Endothelial cell of umbilical vein (primary cell): ENCODE measurements at regions of chr13 and their contacts with region 1.

Region 1: GRCh38 chr13:59318320-59318930 is 845.3 kb downstream of the DIAPH3 start:
- DNase-seq: peak; percentile 86
- H3K4me3 ChIP-seq: no peak overlapping the region
- H3K27ac ChIP-seq: no peak overlapping the region
- H3K4me1 ChIP-seq: peaks cover 23% of the 10 kb centered on the region
- H3K27me3 ChIP-seq: no peaks in the 10 kb centered on the region
- CTCF ChIP-seq: peak; percentile 68 to 71
- POLR2A ChIP-seq: no peak

Region 2: DNA sequence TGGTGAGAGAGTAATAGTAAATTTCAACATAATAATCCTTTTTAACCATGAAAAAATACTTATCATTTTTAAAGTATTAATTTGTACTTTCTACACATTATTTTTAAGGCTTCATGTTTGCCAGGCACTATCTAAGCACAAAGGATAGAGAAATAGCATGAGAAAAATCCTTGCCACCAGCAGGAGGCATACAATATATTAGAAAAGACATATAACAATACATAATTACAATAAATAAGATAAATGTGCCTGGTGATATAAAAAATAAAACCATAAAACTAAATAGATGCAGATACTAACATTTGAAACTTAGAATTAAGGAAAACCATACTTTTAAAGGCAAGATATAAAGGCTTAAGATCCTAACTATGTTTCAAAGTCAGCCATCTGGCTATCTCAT is 411.1 kb before region 1 on chr13:
- CTCF ChIA-PET with region 1: interaction called, 6 read pairs
- POLR2A ChIA-PET with region 1: no interaction called
- dilution Hi-C with region 1: no loop called
- intact Hi-C with region 1: loop called (anchors 5 kb)
- DNase-seq: no peak
- H3K4me3 ChIP-seq: no peak overlapping the region
- H3K27ac ChIP-seq: no peak overlapping the region
- H3K4me1 ChIP-seq: no peaks in the 10 kb centered on the region
- H3K27me3 ChIP-seq: no peaks in the 10 kb centered on the region
- CTCF ChIP-seq: no peak
- POLR2A ChIP-seq: no peak

Region 3: DNA sequence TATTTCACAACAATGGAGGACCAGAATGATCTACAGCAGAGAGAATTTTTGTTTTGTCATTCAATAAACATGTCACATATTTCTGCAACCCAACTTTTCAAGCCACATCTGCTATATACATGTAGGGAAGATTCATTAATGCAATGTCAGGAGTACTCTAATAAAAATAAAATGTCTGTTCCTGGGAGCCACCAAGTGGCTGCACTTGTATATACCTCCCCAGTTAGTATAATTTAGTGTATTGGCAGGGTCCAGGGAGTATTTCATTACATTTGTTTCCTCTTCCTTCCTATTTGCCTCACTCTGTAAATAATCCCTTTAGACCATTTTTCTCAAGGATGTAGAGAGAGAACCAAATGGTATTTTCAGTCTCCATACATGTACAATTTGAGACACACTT is 323.6 kb before region 1 on chr13:
- CTCF ChIA-PET with region 1: interaction called, 4 read pairs
- POLR2A ChIA-PET with region 1: no interaction called
- dilution Hi-C with region 1: no loop called
- intact Hi-C with region 1: loop called (anchors 10 kb)
- DNase-seq: peak; percentile 5
- H3K4me3 ChIP-seq: no peak overlapping the region
- H3K27ac ChIP-seq: no peak overlapping the region
- H3K4me1 ChIP-seq: no peaks in the 10 kb centered on the region
- H3K27me3 ChIP-seq: no peaks in the 10 kb centered on the region
- CTCF ChIP-seq: no peak
- POLR2A ChIP-seq: no peak

Region 4: GRCh38 chr13:59269476-59269875 is 48.9 kb before region 1 on chr13:
- CTCF ChIA-PET with region 1: interaction called, 4 read pairs
- POLR2A ChIA-PET with region 1: no interaction called
- dilution Hi-C with region 1: no loop called
- intact Hi-C with region 1: loop called (anchors 2 kb)
- DNase-seq: no peak
- H3K4me3 ChIP-seq: no peak overlapping the region
- H3K27ac ChIP-seq: no peak overlapping the region
- H3K4me1 ChIP-seq: peaks cover 24% of the 10 kb centered on the region
- H3K27me3 ChIP-seq: no peaks in the 10 kb centered on the region
- CTCF ChIP-seq: no peak
- POLR2A ChIP-seq: no peak

Region 5: DNA sequence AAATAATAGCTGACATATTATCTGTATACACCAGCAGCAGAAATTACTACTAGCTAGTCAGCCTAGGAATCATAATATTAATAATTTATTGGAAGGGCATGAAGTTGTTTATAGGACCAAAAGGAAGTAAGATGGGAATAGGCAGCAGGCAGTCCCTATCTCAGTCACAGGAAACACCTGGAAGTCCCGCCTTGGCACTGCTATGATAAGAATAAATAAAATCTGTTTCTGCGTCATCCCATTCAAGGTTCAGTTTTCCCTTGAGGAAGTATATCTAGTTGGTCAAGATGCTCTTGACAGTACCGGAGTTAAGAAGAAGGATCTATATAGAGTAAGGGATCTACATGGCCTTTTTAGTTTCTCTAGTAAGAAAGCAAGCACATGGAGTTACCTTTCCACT is 14.5 kb after region 1 on chr13:
- CTCF ChIA-PET with region 1: interaction called, 16 read pairs
- POLR2A ChIA-PET with region 1: no interaction called
- dilution Hi-C with region 1: no loop called
- intact Hi-C with region 1: loop called (anchors 1 kb)
- DNase-seq: peak; percentile 84
- H3K4me3 ChIP-seq: no peak overlapping the region
- H3K27ac ChIP-seq: no peak overlapping the region
- H3K4me1 ChIP-seq: peaks cover 16% of the 10 kb centered on the region
- H3K27me3 ChIP-seq: no peaks in the 10 kb centered on the region
- CTCF ChIP-seq: no peak
- POLR2A ChIP-seq: no peak